Activated naive CD4-positive, alpha-beta T cell treated with anti-CD3 and anti-CD28 coated beads for 36 hours (primary cell): ENCODE measurements at regions of chr7 and their contacts with region 1.

Region 1: GRCh38 chr7:127897704-127898454 is 133.4 kb downstream of the LRRC4 start:
- DNase-seq: peak; percentile 58
- H3K4me3 Mint-ChIP-seq: no peak overlapping the region
- H3K27ac Mint-ChIP-seq: no peak overlapping the region
- H3K4me1 Mint-ChIP-seq: peaks cover 15% of the 10 kb centered on the region
- H3K27me3 Mint-ChIP-seq: no peaks in the 10 kb centered on the region

Region 2: GRCh38 chr7:127585044-127585953 is 312.6 kb before region 1 on chr7 and contains the start of gene GCC1:
- CTCF ChIA-PET with region 1: no interaction called
- intact Hi-C with region 1: loop called (anchors 2 kb)
- DNase-seq: peak; percentile 94
- H3K4me3 Mint-ChIP-seq: peak within 1 kb of the TSS; percentile 89
- H3K27ac Mint-ChIP-seq: peak within 1 kb of the TSS; percentile 70
- H3K4me1 Mint-ChIP-seq: peaks cover 66% of the 10 kb centered on the region
- H3K27me3 Mint-ChIP-seq: no peaks in the 10 kb centered on the region
- total RNA-seq, gene GCC1: 11.0 to 12.0 TPM

Region 3: GRCh38 chr7:127730658-127731276 is 167.1 kb before region 1 on chr7:
- CTCF ChIA-PET with region 1: no interaction called
- intact Hi-C with region 1: no loop called
- DNase-seq: no peak
- H3K4me3 Mint-ChIP-seq: no peak overlapping the region
- H3K27ac Mint-ChIP-seq: no peak overlapping the region
- H3K4me1 Mint-ChIP-seq: no peaks in the 10 kb centered on the region
- H3K27me3 Mint-ChIP-seq: no peaks in the 10 kb centered on the region

Region 4: DNA sequence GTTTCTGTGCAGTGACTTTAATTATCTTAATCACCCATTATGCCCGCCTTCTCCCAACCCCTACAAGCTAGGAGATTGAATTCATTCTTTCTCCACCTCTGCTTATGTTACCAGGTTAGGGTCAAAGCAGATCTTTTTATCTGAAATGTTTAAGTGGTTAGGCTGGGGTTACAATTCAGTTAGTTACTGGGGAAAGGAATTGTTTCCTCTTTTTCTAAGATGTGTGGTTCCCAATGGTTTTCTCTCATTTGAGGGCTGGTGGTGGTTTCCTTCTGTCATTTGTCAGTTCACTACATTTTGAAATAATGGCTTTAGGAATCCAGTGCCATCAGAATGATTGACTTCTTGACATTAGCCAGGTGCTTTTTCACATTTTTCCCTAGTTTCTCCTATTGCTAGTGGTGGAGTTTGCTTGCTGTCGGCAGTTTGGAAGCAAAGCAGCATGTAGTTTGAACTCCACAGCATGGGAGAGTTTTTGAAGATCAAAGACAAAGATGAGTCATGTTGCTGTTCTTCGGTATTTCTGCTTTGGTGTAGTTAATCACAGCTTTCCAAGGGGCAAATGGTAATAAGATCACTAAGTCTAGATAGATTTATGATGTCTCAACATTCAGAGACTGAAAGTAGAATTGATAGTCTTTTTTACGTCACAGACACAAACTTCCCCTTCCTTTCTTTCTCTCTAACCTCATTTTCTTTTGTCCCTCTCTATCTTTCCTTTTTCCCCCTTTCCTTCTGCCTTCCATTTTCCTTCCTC is 77.7 kb before region 1 on chr7:
- CTCF ChIA-PET with region 1: no interaction called
- intact Hi-C with region 1: loop called (anchors 1 kb)
- DNase-seq: no peak
- H3K4me3 Mint-ChIP-seq: no peak overlapping the region
- H3K27ac Mint-ChIP-seq: peak overlapping the region; percentile 10
- H3K4me1 Mint-ChIP-seq: peaks cover 26% of the 10 kb centered on the region
- H3K27me3 Mint-ChIP-seq: no peaks in the 10 kb centered on the region

Region 5: GRCh38 chr7:127858091-127858914 is 39.6 kb before region 1 on chr7:
- CTCF ChIA-PET with region 1: no interaction called
- intact Hi-C with region 1: loop called (anchors 1 kb)
- DNase-seq: no peak
- H3K4me3 Mint-ChIP-seq: no peak overlapping the region
- H3K27ac Mint-ChIP-seq: no peak overlapping the region
- H3K4me1 Mint-ChIP-seq: peaks cover 54% of the 10 kb centered on the region
- H3K27me3 Mint-ChIP-seq: no peaks in the 10 kb centered on the region

Region 6: DNA sequence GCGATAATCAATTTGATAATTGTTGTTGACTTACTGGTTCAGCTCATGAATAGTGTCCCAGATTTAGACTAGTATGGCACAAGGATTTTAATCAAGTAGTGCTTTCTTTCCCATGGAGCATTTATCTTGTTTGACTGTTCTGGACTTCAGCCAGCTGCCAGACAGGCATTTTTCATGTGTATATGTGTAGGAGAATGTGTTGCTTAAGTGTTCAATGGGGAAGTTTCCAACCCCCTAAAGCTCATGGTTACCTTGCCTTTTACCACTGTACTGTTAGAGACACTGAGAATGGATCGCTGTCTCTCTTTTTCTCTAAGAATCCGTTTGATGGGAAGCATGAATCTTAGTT is 29.4 kb after region 1 on chr7:
- CTCF ChIA-PET with region 1: no interaction called
- intact Hi-C with region 1: loop called (anchors 2 kb)
- DNase-seq: no peak
- H3K4me3 Mint-ChIP-seq: no peak overlapping the region
- H3K27ac Mint-ChIP-seq: no peak overlapping the region
- H3K4me1 Mint-ChIP-seq: peaks cover 11% of the 10 kb centered on the region
- H3K27me3 Mint-ChIP-seq: no peaks in the 10 kb centered on the region

Region 7: DNA sequence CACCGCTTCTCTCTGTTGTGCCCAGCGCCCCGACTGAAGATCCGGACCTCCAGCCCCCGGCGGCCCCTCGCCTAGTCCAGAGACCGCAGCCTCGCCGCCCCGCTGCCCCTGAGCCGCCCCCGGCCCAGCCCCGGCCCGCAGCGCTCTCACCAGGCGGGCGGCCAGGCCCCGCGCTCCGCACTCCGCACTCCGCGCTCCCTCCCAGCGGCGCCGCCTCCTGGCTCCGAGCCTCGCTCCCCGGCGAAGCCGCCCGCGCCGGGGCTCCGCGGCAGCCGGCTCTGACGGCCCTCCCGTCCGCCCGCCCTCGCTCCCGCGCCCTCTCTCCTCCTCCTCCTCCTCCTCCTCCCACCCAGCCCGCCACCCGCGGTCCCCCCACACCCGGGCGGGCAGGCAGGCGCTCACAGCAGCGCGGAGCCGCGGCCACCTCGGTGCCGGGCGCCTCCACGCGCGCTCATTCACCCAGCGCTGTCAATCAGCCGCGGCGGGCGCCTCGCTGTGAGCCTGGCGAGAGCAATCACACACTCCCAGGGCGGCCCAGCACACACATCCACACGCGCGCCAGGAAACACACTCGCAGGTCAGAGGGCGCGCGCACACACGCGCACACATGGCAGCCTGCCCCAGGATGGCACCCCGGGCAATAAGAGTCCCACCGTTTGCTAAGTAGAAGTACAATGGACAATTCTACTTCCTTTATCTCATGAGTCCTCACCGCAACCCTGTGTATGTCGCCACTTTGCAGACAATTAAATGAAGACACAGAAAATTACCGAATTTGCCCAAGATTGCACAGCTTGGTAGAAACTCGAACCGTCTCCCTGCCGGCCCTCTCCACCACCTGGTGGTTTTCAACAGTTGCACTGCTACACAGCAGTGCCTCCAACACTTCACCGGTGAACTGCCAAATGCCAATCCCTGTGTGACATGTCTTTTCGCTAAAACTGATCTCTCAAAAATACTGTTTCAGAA is 463.8 kb after region 1 on chr7 and contains the start of gene PRRT4:
- CTCF ChIA-PET with region 1: no interaction called
- intact Hi-C with region 1: loop called (anchors 5 kb)
- DNase-seq: peak; percentile 42
- H3K4me3 Mint-ChIP-seq: peak within 1 kb of the TSS; percentile 73
- H3K27ac Mint-ChIP-seq: no peak within 1 kb of the TSS
- H3K4me1 Mint-ChIP-seq: peaks cover 22% of the 10 kb centered on the region
- H3K27me3 Mint-ChIP-seq: peaks cover 46% of the 10 kb centered on the region
- total RNA-seq, gene PRRT4: 0.40 TPM in 1 of 2 experiments, not detected in the other